ENCODE measurements at regions of chr11 and their contacts with region 1.

Region 1: DNA sequence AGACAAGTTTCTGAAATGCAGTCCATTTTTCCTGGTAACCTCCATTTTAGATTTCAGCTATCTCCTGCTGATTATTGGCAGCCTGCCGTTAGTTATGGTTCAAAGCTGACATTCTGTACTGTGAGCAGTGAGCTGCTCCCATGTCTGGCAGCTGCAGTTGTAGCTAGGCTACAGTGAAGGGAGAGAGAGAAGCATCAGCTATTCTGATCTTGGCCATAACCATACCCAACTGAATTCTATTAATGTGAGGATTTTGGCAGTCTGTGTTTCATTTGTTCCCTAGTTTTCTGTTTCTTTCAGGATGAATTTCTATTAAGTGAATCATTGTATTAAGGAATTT is 33.4 kb downstream of the SIK2 start:
- DNase-seq: no peak

Region 2: GRCh38 chr11:111703576-111703975 is 67.9 kb after region 1 on chr11:
- intact Hi-C with region 1: loop called (anchors 5 kb)
- DNase-seq: no peak